Activated CD4-positive, alpha-beta T cell treated with anti-CD3 and anti-CD28 coated beads for 36 hours (primary cell): ENCODE measurements at regions of chr6 and their contacts with region 1.

Region 1: GRCh38 chr6:79869600-79870084 is 77.7 kb downstream of the ELOVL4 start:
- DNase-seq: peak; percentile 91
- ATAC-seq: peak; percentile 100
- H3K4me3 Mint-ChIP-seq: peak overlapping the region; percentile 42
- H3K27ac Mint-ChIP-seq: peak overlapping the region; percentile 23
- H3K4me1 Mint-ChIP-seq: peaks cover 8% of the 10 kb centered on the region
- H3K27me3 Mint-ChIP-seq: peaks cover 7% of the 10 kb centered on the region

Region 2: GRCh38 chr6:79233611-79234149 is 636.0 kb before region 1 on chr6:
- CTCF ChIA-PET with region 1: no interaction called
- POLR2A ChIA-PET with region 1: no interaction called
- intact Hi-C with region 1: loop called in 1 of 2 experiments (anchors 5 kb)
- DNase-seq: peak; percentile 83
- ATAC-seq: peak; percentile 68
- H3K4me3 Mint-ChIP-seq: peak overlapping the region; percentile 98
- H3K27ac Mint-ChIP-seq: peak overlapping the region; percentile 92
- H3K4me1 Mint-ChIP-seq: peaks cover 16% of the 10 kb centered on the region
- H3K27me3 Mint-ChIP-seq: peaks cover 2% of the 10 kb centered on the region

Region 3: DNA sequence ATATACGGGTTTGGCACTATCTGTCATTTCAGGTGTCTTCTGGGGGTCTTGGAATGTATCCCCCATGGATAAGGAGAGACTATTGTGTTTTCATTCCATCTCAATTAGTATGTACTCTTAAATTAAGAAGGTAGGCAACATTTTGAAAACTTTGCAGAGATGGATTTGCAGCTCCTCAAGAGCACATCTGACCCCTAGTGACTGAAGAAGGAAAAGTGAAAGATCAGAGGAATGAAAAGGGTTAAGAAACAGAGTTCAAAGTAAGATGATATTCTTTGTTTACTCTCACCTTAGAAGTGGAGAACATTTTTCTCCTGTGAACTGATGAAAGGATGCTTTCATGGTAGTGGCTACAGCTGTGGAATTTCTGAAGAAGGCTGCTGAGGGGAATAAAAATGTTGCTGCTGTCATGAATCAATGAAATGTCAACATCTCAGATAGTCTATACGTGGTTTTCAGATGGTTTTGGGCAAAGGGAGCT is 197.0 kb before region 1 on chr6:
- CTCF ChIA-PET with region 1: interaction called, 3 read pairs
- POLR2A ChIA-PET with region 1: no interaction called
- intact Hi-C with region 1: loop called in 1 of 2 experiments (anchors 2 kb)
- DNase-seq: no peak
- ATAC-seq: peak; percentile 28
- H3K4me3 Mint-ChIP-seq: no peak overlapping the region
- H3K27ac Mint-ChIP-seq: peak overlapping the region; percentile 74
- H3K4me1 Mint-ChIP-seq: peaks cover 31% of the 10 kb centered on the region
- H3K27me3 Mint-ChIP-seq: no peaks in the 10 kb centered on the region

Region 4: GRCh38 chr6:79813854-79814709 is 55.6 kb before region 1 on chr6:
- CTCF ChIA-PET with region 1: interaction called, 8 read pairs
- POLR2A ChIA-PET with region 1: no interaction called
- intact Hi-C with region 1: loop called in 1 of 2 experiments (anchors 2 kb)
- DNase-seq: peak; percentile 81
- ATAC-seq: peak; percentile 71
- H3K4me3 Mint-ChIP-seq: no peak overlapping the region
- H3K27ac Mint-ChIP-seq: no peak overlapping the region
- H3K4me1 Mint-ChIP-seq: no peaks in the 10 kb centered on the region
- H3K27me3 Mint-ChIP-seq: peaks cover 2% of the 10 kb centered on the region

Region 5: DNA sequence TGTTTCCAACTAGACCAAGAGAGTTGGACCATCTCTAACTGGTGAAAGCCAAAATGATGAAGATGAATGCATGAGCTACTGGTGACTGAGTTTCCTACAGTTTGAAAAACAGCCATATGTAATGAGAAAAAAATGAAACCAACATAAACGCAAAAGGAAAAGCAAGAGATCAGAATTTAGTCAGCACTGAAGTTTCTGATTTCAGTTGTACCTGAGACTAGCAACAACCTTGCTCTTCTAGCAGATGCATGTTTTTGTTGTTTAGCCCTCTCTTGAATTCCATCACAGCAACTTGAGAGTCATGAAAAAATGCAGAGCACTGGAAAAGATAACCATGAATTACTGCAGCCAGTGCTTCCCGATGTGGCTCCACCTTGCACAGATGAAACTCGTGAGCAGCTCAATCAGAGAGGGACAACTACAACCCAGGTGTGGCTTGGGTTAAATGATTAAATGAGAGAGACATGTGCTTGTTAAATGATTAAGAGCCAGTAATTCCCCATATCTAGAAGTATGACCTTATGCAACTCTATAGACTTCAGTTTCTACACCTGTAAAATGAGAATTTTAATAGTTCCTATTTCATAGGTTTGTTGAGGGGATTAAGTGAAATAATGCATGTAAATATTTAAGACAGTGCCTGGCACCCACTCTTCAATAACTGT is 27.1 kb before region 1 on chr6:
- CTCF ChIA-PET with region 1: no interaction called
- POLR2A ChIA-PET with region 1: no interaction called
- intact Hi-C with region 1: no loop called
- DNase-seq: no peak
- ATAC-seq: no peak
- H3K4me3 Mint-ChIP-seq: no peak overlapping the region
- H3K27ac Mint-ChIP-seq: no peak overlapping the region
- H3K4me1 Mint-ChIP-seq: no peaks in the 10 kb centered on the region
- H3K27me3 Mint-ChIP-seq: peaks cover 14% of the 10 kb centered on the region

Region 6: GRCh38 chr6:80004173-80005072 is 134.8 kb after region 1 on chr6 and contains the start of gene TTK:
- CTCF ChIA-PET with region 1: no interaction called
- POLR2A ChIA-PET with region 1: no interaction called
- intact Hi-C with region 1: loop called in 1 of 2 experiments (anchors 5 kb)
- DNase-seq: peak; percentile 94
- ATAC-seq: peak; percentile 99
- H3K4me3 Mint-ChIP-seq: peak within 1 kb of the TSS; percentile 87
- H3K27ac Mint-ChIP-seq: peak within 1 kb of the TSS; percentile 95
- H3K4me1 Mint-ChIP-seq: peaks cover 13% of the 10 kb centered on the region
- H3K27me3 Mint-ChIP-seq: no peaks in the 10 kb centered on the region
- total RNA-seq, gene TTK: 39.1 to 47.2 TPM